ENCODE measurements at regions of chr1 and their contacts with region 1.

Region 1: DNA sequence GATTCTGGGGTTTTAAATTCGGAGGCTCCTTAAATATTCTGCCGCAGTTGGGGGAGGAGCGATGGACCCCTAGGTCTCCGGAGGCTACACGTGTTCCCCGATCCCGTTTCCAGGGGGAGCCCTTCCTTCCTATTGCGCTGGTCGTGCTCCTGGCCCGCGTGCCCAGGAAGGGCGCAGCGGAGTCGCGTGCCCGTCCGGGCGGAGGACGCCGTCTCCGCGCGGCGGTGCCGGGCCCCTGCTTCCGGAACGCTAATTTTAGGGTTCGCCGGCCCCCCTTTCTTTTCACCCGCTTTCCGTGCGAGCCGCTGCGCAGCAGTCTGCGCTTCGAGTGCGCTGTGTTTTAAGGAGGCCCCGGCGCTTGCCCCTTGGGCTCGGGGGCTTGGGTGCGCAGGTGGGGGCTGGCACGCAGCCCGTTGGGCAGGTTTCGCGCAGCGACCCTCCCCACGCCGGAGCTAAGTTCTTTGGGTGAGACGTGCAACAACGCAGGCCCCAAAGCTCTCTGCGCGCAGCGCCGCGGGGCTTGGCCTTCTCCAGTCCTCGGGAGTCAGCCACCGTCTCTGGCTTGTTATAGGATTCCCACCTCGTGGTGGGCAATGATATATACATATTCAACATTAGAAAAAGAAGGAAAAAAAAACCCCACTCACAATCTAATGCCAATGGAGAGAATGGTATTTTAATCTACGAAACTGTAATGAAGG is 43.5 kb upstream of the DNAJC6 start:
- DNase-seq: peak; percentile 21 to 60 (median 51)
- ATAC-seq: peak; percentile 76
- H3K4me3 ChIP-seq: peak overlapping the region; percentile 55
- H3K4me3 Mint-ChIP-seq: peak overlapping the region; percentile 51 to 89 (median 82)
- H3K27ac ChIP-seq: peak overlapping the region; percentile 24
- H3K27ac Mint-ChIP-seq: peak overlapping the region in 7 of 9 donors; percentile 49 to 79 (median 72)
- H3K4me1 ChIP-seq: peaks cover 11 to 16% of the 10 kb centered on the region in 2 donors
- H3K4me1 Mint-ChIP-seq: peaks cover 13 to 30% (median 19%) of the 10 kb centered on the region in 7 donors
- H3K27me3 ChIP-seq: no peaks in the 10 kb centered on the region
- H3K27me3 Mint-ChIP-seq: peaks cover 13 to 47% (median 24%) of the 10 kb centered on the region in 5 donors

Region 2: GRCh38 chr1:65214340-65215027 is 51.3 kb before region 1 on chr1:
- CTCF ChIA-PET with region 1: no interaction called
- POLR2A ChIA-PET with region 1: interaction called, 3 read pairs
- intact Hi-C with region 1: loop called in 1 of 2 experiments (anchors 5 kb)
- DNase-seq: no peak
- ATAC-seq: no peak
- H3K4me3 ChIP-seq: no peak overlapping the region
- H3K4me3 Mint-ChIP-seq: no peak overlapping the region
- H3K27ac ChIP-seq: no peak overlapping the region
- H3K27ac Mint-ChIP-seq: peak overlapping the region in 1 of 9 donors; percentile 58
- H3K4me1 ChIP-seq: no peaks in the 10 kb centered on the region
- H3K4me1 Mint-ChIP-seq: peaks cover 4 to 43% (median 15%) of the 10 kb centered on the region in 7 donors
- H3K27me3 ChIP-seq: no peaks in the 10 kb centered on the region
- H3K27me3 Mint-ChIP-seq: peaks cover 0 to 4% (median 0%) of the 10 kb centered on the region in 5 donors